ENCODE measurements at regions of chr15 and their contacts with region 1.

Region 1: GRCh38 chr15:83559310-83559966 is 94.5 kb upstream of the ADAMTSL3 start:
- DNase-seq: peak; percentile 21
- H3K4me3 ChIP-seq: no peak overlapping the region
- CTCF ChIP-seq: peak; percentile 81

Region 2: DNA sequence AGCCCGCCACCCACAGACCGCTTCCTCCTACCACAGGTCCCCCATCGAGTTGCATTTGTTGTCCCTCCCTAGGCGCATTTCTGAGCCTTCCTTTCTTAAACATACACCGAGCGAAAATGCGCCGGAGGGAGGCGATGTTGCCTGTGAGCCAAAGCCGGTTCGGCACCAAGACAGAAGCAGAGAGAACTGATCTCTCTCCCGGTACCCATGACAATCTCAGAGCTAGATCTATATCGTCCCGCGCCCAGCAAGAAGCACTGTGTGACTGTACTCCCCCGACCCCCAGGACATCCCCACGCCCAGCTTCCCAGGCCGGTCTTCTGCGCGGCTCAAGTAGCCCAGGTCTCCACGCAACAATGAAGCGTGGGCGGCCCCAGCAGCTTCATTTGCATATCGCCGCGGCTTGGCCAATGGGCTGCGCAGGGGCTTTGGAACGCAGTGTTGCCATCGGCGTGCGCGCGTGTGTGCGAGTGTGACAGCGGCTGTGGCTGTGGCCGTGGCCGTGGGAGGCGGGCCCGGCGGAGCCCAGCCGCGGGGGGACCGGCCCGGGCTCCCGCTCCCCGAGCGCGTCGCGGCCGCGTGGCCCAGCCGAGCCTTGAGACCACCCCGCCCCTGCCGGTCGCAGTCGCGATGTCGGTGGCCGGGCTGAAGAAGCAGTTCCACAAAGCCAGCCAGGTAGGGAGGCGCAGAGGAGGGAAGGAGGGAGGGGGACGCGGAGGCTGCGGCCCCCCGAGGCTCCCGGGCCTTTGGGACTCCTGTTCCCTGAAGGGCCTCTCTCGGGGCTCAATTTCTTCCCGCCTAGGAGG is 112.3 kb before region 1 on chr15 and contains the start of gene SH3GL3:
- CTCF ChIA-PET with region 1: interaction called, 28 read pairs
- POLR2A ChIA-PET with region 1: no interaction called
- DNase-seq: no peak
- H3K4me3 ChIP-seq: peak within 1 kb of the TSS; percentile 55
- CTCF ChIP-seq: peak; percentile 16